WTC11 (cell line): ENCODE measurements at regions of chr6 and their contacts with region 1.

Region 1: GRCh38 chr6:155364844-155365437 is 50.7 kb upstream of the TFB1M start:
- DNase-seq: no peak
- ATAC-seq: no peak
- H3K4me3 Mint-ChIP-seq: no peak overlapping the region
- H3K27ac Mint-ChIP-seq: no peak overlapping the region
- H3K4me1 Mint-ChIP-seq: peaks cover 10% of the 10 kb centered on the region
- H3K27me3 Mint-ChIP-seq: no peaks in the 10 kb centered on the region
- CTCF ChIP-seq: no peak

Region 2: DNA sequence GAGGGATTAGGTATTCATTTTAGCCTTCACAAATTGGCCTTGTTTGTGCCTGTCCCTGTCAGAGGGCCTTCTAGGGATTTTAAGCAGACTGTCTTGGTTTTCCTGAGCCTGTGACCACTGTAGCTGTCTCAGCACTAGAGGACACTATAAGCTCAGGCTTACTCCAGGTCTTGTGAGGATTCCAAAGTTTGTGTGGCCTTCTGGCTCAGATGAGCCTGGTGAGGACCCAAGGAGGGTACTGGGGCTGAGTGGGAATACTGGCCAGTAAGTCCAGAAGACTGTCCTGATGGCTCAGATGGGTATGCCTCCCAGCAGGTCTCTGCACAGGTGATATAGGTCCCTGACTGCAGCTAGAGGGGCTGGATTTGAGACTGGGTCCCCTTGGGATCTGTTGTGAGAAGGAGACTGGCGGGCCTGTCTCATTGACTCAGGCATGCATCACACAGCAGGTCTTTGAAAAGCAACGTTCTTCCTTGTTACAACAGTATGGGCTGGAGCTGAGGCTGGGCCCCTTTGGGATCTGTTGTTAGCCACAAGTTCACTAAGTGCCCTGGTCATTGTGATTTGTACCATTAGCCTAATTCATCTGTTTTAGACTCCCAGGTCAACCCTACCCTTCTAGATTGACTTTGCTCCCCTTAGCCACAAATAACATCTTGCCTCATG is 24.3 kb before region 1 on chr6:
- CTCF ChIA-PET with region 1: no interaction called
- POLR2A ChIA-PET with region 1: no interaction called
- DNase-seq: no peak
- ATAC-seq: peak; percentile 92
- H3K4me3 Mint-ChIP-seq: no peak overlapping the region
- H3K27ac Mint-ChIP-seq: no peak overlapping the region
- H3K4me1 Mint-ChIP-seq: peaks cover 5% of the 10 kb centered on the region; the same call in 1 of the 2 replicates
- H3K27me3 Mint-ChIP-seq: no peaks in the 10 kb centered on the region; the same call in none of the 2 replicates
- CTCF ChIP-seq: no peak

Region 3: DNA sequence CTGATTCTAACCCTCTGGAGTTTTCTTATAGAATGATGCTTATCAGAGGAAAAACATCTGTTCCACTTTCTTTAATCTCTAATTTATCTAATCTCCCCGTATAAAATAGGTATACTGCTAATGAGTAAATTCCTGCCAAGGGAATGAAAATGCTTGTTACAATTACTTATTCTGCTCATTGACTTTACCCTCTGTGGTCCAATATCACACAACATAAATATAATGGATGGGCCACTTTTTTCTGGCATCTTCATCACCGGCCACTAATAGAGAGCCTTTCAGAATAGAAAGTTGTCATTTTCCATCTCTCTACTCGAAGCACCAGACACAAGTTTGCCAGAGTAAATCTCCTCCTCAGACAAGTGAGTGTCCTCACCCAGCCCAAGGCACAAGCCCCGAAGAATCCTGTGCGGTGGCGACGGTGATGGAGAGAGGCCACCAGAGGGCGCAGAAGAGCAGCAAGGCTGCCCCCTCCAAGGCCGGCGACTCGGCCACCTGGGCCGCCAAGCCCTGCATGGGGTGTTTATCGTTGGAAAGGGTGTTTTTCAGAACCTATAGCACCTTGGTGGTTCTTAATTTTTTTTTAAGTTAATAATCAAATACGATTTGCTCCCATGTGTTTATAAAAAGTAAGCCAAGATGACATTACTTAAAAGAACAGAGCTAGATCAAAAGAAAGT is 1199.3 kb after region 1 on chr6:
- CTCF ChIA-PET with region 1: no interaction called
- POLR2A ChIA-PET with region 1: interaction called, 11 read pairs
- DNase-seq: peak; percentile 85
- ATAC-seq: peak; percentile 98
- H3K4me3 Mint-ChIP-seq: no peak overlapping the region
- H3K27ac Mint-ChIP-seq: no peak overlapping the region
- H3K4me1 Mint-ChIP-seq: peaks cover 7% of the 10 kb centered on the region
- H3K27me3 Mint-ChIP-seq: 0 out of 2 replicates have a peak, but pooled peaks cover 3% of the 10 kb centered on the region
- CTCF ChIP-seq: peak; percentile 80